Activated B cell treated with CpG ODN at 0.5 μM for 24 hours (primary cell): ENCODE measurements at regions of chr11 and their contacts with region 1.

Region 1: DNA sequence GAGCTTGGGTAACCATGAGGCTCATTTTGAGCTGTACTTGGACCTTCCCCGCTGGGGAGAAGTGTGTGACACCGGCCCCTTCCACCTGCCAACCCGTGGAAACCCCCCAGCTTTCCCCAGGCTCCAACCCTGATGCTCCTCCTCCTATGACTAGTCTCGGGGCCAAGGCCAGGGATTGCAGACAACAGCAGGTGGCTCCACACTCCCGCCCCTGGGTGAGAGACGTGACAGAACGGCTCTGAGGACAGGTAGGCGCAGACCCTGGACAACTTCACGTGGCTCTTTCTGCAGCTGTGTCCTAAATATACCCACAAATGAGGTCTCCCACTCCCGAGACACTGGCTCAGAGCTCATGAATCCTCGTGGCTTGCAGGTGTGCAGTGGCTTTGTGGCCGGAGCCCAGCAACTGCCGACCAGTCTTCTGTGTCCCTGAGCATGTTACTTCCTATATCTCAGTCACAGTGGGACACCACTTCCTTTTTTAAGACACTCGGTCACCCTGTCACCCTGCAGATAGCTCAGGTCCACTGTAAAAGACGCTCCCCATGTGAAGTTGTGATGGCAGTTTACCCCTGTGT is 55.2 kb downstream of the NECTIN1 start:
- DNase-seq: peak; percentile 66
- ATAC-seq: peak; percentile 92
- H3K4me3 Mint-ChIP-seq: peak overlapping the region; percentile 78
- H3K27ac Mint-ChIP-seq: peak overlapping the region; percentile 91
- H3K4me1 Mint-ChIP-seq: peaks cover 31% of the 10 kb centered on the region
- H3K27me3 Mint-ChIP-seq: no peaks in the 10 kb centered on the region
- CTCF ChIP-seq: no peak

Region 2: GRCh38 chr11:119694334-119694733 is 20.5 kb after region 1 on chr11:
- CTCF ChIA-PET with region 1: interaction called, 5 read pairs
- POLR2A ChIA-PET with region 1: interaction called, 19 read pairs
- intact Hi-C with region 1: no loop called
- DNase-seq: no peak
- ATAC-seq: no peak
- H3K4me3 Mint-ChIP-seq: no peak overlapping the region
- H3K27ac Mint-ChIP-seq: peak overlapping the region; percentile 21
- H3K4me1 Mint-ChIP-seq: peaks cover 14% of the 10 kb centered on the region
- H3K27me3 Mint-ChIP-seq: no peaks in the 10 kb centered on the region
- CTCF ChIP-seq: no peak

Region 3: GRCh38 chr11:120013325-120014270 is 339.8 kb after region 1 on chr11:
- CTCF ChIA-PET with region 1: no interaction called
- POLR2A ChIA-PET with region 1: no interaction called
- intact Hi-C with region 1: loop called (anchors 2 kb)
- DNase-seq: no peak
- ATAC-seq: no peak
- H3K4me3 Mint-ChIP-seq: no peak overlapping the region
- H3K27ac Mint-ChIP-seq: no peak overlapping the region
- H3K4me1 Mint-ChIP-seq: no peaks in the 10 kb centered on the region
- H3K27me3 Mint-ChIP-seq: peaks cover 47% of the 10 kb centered on the region
- CTCF ChIP-seq: no peak

Region 4: GRCh38 chr11:120108154-120108865 is 434.5 kb after region 1 on chr11:
- CTCF ChIA-PET with region 1: interaction called, 18 read pairs
- POLR2A ChIA-PET with region 1: no interaction called
- intact Hi-C with region 1: no loop called
- DNase-seq: peak; percentile 59
- ATAC-seq: peak; percentile 86
- H3K4me3 Mint-ChIP-seq: no peak overlapping the region
- H3K27ac Mint-ChIP-seq: no peak overlapping the region
- H3K4me1 Mint-ChIP-seq: no peaks in the 10 kb centered on the region
- H3K27me3 Mint-ChIP-seq: peaks cover 21% of the 10 kb centered on the region
- CTCF ChIP-seq: no peak